ENCODE measurements at regions of chr14 and their contacts with region 1.

Region 1: DNA sequence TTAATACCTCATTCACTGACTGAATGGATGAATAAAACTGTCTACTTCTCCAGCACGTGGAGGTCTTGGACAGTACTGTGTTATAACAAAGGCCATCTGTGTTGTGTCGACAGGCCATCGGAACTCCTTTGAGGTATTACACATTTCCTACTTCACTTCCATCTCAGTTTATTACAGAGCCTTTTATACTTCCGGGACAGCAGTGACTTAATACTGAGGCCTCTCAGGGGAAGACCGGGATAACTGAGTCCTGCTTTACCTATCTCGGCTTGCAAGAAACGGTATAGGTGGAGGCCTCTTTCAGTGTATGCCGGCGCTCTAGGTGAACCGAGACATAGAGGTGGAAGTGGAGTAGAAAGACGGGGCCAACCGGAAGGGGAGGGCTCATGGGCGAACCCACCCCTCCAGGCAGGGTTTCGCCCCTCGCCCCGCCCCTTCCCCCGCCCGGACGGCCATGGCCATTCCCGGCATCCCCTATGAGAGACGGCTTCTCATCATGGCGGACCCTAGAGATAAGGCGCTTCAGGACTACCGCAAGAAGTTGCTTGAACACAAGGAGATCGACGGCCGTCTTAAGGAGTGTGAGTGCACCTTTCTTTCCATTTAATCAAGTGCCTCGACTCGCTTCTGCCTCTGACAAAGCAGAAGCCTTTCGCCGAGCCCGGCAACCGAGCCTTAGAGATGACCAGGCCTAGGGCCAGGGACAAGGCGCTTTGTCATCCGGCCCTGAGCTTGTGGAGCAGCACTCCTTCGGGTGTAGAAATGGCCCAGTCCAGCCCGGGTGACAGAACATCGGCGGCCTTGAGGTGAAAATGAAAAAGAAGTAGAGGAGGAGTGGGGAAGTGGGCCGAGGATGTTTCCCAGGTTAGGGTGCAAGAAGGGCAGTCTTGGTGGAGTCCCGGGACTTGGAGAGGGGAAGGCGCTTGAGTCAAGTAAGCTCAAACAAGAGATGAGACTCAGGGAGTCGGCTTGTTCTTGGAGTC is at the start of gene PSMC6:
- DNase-seq: peak; percentile 95 to 97
- ATAC-seq: peak; percentile 99 to 100 (median 100)
- H3K4me3 ChIP-seq: peak within 1 kb of the TSS; percentile 83
- H3K27ac ChIP-seq: peak within 1 kb of the TSS; percentile 92
- H3K4me1 ChIP-seq: peaks cover 24% of the 10 kb centered on the region
- H3K27me3 ChIP-seq: no peaks in the 10 kb centered on the region
- CTCF ChIP-seq: no peak
- total RNA-seq, gene PSMC6: 80.6 to 178 (median 116) TPM

Region 2: DNA sequence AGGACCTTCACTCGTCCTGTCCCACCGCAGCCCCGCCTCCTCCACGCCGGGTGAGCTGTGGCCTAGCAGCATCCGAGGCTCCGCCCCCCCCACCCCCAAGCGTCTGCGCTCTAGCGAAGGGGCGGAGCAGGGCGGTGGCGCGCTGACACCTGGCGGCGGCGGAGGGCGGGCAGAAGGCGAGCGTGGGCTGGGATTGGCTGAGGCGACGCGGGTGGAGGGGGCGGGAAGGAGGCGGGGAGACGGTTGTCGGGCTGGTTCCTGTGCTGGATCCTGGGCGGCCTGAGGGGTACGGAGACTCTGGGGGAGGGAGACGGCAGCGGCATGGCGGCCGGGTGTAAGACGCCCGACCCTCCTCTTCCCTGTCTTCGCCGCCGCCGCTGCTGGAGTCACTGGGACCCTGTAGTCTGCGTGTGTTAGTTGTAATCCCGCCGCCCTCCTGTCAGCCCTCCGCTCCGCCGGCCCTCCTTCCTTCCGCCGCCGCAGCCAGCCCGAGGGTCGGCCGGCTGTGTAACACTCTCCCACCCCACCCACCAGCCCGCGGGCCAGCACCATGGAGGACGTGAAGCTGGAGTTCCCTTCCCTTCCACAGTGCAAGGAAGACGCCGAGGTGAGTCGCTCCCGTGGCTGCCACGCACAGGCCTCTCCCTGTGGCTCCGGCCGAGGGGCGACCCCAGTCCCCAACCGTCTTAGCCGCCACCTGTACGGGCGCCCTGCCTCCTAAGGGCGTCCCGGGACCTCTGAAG is 23.1 kb after region 1 on chr14 and contains the start of gene STYX:
- intact Hi-C with region 1: loop called (anchors 2 kb)
- DNase-seq: peak; percentile 98 to 99
- ATAC-seq: peak; percentile 98 to 99 (median 99)
- H3K4me3 ChIP-seq: peak within 1 kb of the TSS; percentile 91
- H3K27ac ChIP-seq: peak within 1 kb of the TSS; percentile 91
- H3K4me1 ChIP-seq: peaks cover 8% of the 10 kb centered on the region
- H3K27me3 ChIP-seq: no peaks in the 10 kb centered on the region
- CTCF ChIP-seq: peak; percentile 4
- total RNA-seq, gene STYX: 12.5 to 24.7 (median 16.2) TPM

Region 3: DNA sequence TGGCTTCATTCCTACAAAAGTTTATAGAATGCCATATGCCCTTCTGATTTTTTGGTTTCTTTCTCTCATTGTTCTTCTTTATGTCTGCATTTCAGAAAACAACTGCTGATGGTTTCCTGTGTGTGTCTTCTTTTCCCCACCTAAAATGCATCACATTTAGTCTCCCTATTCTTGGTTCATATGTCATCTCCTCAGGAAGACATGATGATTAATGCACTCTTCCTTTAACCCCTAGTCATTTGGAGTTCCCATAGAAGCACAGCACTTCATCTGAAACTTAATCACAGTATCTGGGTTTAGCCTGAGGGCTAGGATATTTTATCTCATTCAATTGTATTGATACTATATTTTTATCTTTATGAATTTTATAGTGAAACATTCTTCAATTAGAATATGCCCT is 62.9 kb after region 1 on chr14:
- intact Hi-C with region 1: loop called in 1 of 2 experiments (anchors 10 kb)
- DNase-seq: no peak
- ATAC-seq: no peak
- H3K4me3 ChIP-seq: no peak overlapping the region
- H3K27ac ChIP-seq: no peak overlapping the region
- H3K4me1 ChIP-seq: no peaks in the 10 kb centered on the region
- H3K27me3 ChIP-seq: no peaks in the 10 kb centered on the region
- CTCF ChIP-seq: no peak